Stomach (tissue), 19 donors: ENCODE measurements at regions of chr14 and their contacts with region 1.

Region 1: GRCh38 chr14:91649930-91650329 is 82.0 kb downstream of the CATSPERB start:
- DNase-seq: peak in 1 of 2 donors; percentile 69
- H3K4me3 ChIP-seq: no peak overlapping the region
- H3K27ac ChIP-seq: no peak overlapping the region
- H3K4me1 ChIP-seq: peaks cover 0 to 8% (median 0%) of the 10 kb centered on the region in 4 donors
- H3K27me3 ChIP-seq: no peaks in the 10 kb centered on the region
- CTCF ChIP-seq: peak in 5 of 7 experiments; percentile 32 to 67 (median 58)
- EP300 ChIP-seq: no peak
- POLR2A ChIP-seq: no peak

Region 2: DNA sequence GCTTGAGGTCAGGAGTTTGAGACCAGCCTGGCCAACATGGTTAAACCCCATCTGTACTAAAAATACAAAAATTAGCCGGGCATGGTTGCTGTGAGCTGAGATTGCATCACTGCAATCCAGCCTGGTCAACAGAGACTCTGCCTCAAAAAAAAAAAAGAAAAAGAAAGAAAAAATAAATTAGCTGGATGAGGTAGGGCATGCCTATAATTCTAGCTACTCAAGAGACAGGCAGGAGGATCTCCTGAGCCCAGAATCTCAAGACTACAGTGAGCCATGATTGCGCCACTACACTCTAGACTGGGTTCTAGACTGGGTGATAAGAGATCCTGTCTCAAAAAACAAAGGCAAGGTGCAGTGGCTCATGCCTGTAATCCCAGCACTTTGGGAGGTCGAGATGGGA is 156.8 kb before region 1 on chr14:
- intact Hi-C with region 1: no loop called
- DNase-seq: no peak
- H3K4me3 ChIP-seq: no peak overlapping the region
- H3K27ac ChIP-seq: no peak overlapping the region
- H3K4me1 ChIP-seq: peaks cover 35 to 82% (median 62%) of the 10 kb centered on the region in 4 donors
- H3K27me3 ChIP-seq: no peaks in the 10 kb centered on the region
- CTCF ChIP-seq: no peak
- EP300 ChIP-seq: no peak
- POLR2A ChIP-seq: no peak

Region 3: GRCh38 chr14:91911474-91912032 is 261.6 kb after region 1 on chr14:
- intact Hi-C with region 1: loop called (anchors 10 kb)
- DNase-seq: peak; percentile 43 to 78
- H3K4me3 ChIP-seq: no peak overlapping the region
- H3K27ac ChIP-seq: peak overlapping the region in 1 of 5 donors; percentile 27
- H3K4me1 ChIP-seq: peaks cover 0 to 22% (median 14%) of the 10 kb centered on the region in 4 donors
- H3K27me3 ChIP-seq: no peaks in the 10 kb centered on the region
- CTCF ChIP-seq: peak in 5 of 7 experiments; percentile 16 to 60 (median 52)
- EP300 ChIP-seq: no peak
- POLR2A ChIP-seq: no peak